ENCODE measurements at regions of chr13 and their contacts with region 1.

Region 1: DNA sequence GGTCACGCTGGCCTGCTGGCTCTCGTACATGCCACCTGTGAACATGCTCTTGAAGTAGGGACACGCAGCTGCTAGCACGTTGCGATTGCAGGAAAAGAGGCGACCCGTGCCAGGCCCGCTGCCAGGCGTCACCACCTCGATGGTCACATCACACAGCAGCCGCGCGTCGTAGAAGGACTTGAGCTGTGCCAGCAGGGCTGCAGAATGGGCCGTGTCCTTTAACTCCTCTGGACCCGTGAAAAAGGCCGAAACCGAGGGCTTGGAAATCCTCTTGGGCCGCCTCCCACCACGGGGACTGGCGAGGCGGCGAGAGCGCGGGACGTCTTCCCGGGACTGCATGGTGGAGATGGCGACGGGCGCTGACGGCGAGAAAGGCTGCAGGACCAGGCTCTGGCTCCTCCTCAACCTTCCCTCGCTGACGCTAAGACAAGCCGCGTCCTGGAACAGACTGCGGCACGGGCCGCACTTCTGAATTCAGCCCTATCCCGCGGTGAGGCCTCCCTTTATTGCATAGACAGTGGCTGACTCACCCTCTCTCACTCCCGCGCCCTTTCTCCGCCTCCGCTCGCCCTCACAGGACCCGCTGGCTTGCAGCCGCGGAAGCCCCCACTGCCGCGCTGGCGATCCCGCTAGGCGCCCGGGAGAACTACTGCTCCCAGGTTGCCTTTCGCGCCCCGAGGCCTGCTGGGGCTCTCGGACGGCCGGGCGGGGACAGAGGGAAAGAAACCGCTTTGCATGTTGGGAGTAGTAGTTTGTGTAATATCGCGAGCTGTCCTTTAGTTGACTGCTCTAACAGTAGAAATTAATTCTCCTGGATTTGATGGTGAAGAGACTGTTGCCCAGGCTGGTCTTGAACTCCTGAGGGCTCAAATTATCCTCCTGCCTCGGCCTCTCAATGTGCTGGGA is at the start of gene KBTBD7:
- H3K4me3 Mint-ChIP-seq: peak within 1 kb of the TSS; percentile 91
- H3K27ac Mint-ChIP-seq: peak within 1 kb of the TSS; percentile 97
- H3K4me1 Mint-ChIP-seq: peaks cover 26% of the 10 kb centered on the region
- H3K27me3 Mint-ChIP-seq: no peaks in the 10 kb centered on the region

Region 2: GRCh38 chr13:41132512-41133152 is 61.5 kb before region 1 on chr13 and contains the start of gene KBTBD6:
- intact Hi-C with region 1: loop called (anchors 1 kb)
- H3K4me3 Mint-ChIP-seq: peak within 1 kb of the TSS; percentile 96
- H3K27ac Mint-ChIP-seq: peak within 1 kb of the TSS; percentile 85
- H3K4me1 Mint-ChIP-seq: peaks cover 30% of the 10 kb centered on the region
- H3K27me3 Mint-ChIP-seq: no peaks in the 10 kb centered on the region